ENCODE measurements at regions of chr12 and their contacts with region 1.

Region 1: DNA sequence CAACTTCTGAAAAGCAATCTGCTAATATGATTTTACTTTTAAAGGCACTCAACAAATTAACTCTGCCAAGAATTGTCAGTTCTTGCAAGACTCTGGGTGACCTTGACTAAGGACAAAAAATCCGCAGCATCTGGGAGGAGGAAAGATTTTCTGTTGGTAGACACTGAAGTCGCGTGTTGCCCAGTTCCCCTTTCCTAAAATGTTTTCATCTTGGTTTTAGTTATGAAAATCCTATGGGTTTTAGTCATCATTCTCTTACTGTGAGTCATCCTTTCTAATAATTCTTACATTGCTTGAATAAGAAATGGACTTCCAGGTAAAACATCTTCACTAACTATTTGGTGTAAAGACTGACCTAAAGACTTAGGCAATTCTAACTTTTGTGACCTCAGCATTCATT is 9.1 kb downstream of the GSG1 start:
- DNase-seq: peak; percentile 30 to 88
- H3K4me3 ChIP-seq: no peak overlapping the region
- H3K27ac ChIP-seq: peak overlapping the region; percentile 80
- H3K4me1 ChIP-seq: peaks cover 67% of the 10 kb centered on the region
- H3K27me3 ChIP-seq: no peaks in the 10 kb centered on the region
- CTCF ChIP-seq: no peak

Region 2: DNA sequence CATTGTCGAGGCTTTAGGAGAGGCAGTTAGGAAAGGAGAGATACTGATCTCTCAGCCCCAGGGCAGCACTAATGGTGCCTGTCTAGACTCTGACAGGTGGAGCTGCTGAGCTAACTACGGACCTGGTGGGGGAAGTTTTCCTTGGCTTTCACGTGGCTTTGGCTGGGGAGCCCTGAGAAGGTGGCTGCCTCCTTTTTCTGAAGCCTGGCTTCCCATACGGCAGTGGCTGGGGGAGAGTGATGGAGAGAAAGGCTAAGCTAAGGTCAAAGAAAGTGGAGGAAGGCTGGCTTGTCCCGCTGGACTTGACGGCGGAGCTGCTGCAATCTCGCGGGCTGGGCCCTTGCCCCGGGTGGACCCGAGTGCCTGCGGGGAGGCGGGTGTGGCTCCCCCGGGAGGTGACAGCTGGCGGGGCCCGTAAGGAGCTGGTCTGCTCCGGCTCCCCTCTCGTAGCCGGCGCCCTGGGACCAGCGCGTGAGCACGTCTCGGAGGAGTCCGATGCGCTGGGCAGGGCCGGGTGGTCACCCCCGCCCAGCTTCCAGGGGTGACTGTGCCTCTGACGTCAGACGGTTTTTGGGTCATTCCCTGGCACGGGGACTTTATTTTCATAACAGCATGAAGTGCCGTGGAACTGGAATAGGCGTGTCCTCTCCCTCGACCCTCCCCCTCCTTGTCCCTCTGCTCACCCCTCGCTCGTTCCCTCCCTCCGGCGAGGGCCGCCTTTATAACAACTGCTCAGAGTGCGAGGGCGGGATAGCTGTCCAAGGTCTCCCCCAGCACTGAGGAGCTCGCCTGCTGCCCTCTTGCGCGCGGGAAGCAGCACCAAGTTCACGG is 203.3 kb before region 1 on chr12 and contains the start of gene GPRC5A:
- CTCF ChIA-PET with region 1: no interaction called
- POLR2A ChIA-PET with region 1: no interaction called
- intact Hi-C with region 1: loop called (anchors 10 kb)
- DNase-seq: peak; percentile 96 to 100
- H3K4me3 ChIP-seq: peak within 1 kb of the TSS; percentile 86
- H3K27ac ChIP-seq: peak within 1 kb of the TSS; percentile 93
- H3K4me1 ChIP-seq: peaks cover 44% of the 10 kb centered on the region
- H3K27me3 ChIP-seq: no peaks in the 10 kb centered on the region
- CTCF ChIP-seq: no peak; the same call in 1 of the 2 replicates
- total RNA-seq, gene GPRC5A: 468 and 642 TPM in 2 replicates

Region 3: GRCh38 chr12:13044002-13044905 is 50.1 kb before region 1 on chr12 and contains the start of gene FAM234B:
- CTCF ChIA-PET with region 1: interaction called, 3 read pairs
- POLR2A ChIA-PET with region 1: interaction called, 4 read pairs
- intact Hi-C with region 1: loop called (anchors 5 kb)
- DNase-seq: peak in 1 of 2 experiments; percentile 71
- H3K4me3 ChIP-seq: peak within 1 kb of the TSS; percentile 99
- H3K27ac ChIP-seq: no peak within 1 kb of the TSS
- H3K4me1 ChIP-seq: peaks cover 11% of the 10 kb centered on the region; the same call in 1 of the 2 replicates
- H3K27me3 ChIP-seq: no peaks in the 10 kb centered on the region
- CTCF ChIP-seq: no peak; the same call in 1 of the 2 replicates
- total RNA-seq, gene FAM234B: 7.3 and 7.5 TPM in 2 replicates

Region 4: DNA sequence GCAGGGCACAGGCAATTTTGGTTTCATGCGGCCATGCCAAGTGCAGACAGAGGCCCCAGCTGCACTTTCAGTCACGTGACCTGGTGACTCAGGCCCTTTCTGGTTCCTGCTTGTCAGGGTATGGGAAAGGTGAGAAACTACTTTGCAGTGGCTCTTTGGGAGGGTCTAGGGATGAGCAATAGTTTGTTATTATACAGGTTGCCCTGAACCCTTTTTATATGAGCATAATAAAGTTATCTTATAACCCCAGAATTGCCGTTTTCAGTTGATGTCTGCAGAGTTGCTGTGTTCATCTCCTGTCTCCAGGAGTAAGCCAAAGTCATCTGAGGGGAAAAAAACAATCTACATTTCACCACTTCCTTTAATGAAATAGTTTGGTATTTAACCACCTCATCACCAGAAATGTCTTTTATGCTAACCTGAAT is 71.3 kb after region 1 on chr12:
- CTCF ChIA-PET with region 1: interaction called, 3 read pairs
- POLR2A ChIA-PET with region 1: interaction called, 5 read pairs
- intact Hi-C with region 1: loop called (anchors 1 kb)
- DNase-seq: peak; percentile 95 to 98
- H3K4me3 ChIP-seq: no peak overlapping the region
- H3K27ac ChIP-seq: peak overlapping the region; percentile 97
- H3K4me1 ChIP-seq: peaks cover 73% of the 10 kb centered on the region
- H3K27me3 ChIP-seq: no peaks in the 10 kb centered on the region
- CTCF ChIP-seq: no peak

Region 5: GRCh38 chr12:13203034-13203922 is 108.9 kb after region 1 on chr12:
- CTCF ChIA-PET with region 1: interaction called, 10 read pairs
- POLR2A ChIA-PET with region 1: interaction called, 22 read pairs
- intact Hi-C with region 1: loop called (anchors 1 kb)
- DNase-seq: peak in 1 of 2 experiments; percentile 83
- H3K4me3 ChIP-seq: peak overlapping the region; percentile 32; the same call in 1 of the 2 replicates
- H3K27ac ChIP-seq: peak overlapping the region; percentile 99
- H3K4me1 ChIP-seq: peaks cover 97% of the 10 kb centered on the region
- H3K27me3 ChIP-seq: no peaks in the 10 kb centered on the region
- CTCF ChIP-seq: no peak

Measured in PC-9 (cell line).